Aorta (tissue), 5 donors: ENCODE measurements at regions of chr1 and their contacts with region 1.

Region 1: DNA sequence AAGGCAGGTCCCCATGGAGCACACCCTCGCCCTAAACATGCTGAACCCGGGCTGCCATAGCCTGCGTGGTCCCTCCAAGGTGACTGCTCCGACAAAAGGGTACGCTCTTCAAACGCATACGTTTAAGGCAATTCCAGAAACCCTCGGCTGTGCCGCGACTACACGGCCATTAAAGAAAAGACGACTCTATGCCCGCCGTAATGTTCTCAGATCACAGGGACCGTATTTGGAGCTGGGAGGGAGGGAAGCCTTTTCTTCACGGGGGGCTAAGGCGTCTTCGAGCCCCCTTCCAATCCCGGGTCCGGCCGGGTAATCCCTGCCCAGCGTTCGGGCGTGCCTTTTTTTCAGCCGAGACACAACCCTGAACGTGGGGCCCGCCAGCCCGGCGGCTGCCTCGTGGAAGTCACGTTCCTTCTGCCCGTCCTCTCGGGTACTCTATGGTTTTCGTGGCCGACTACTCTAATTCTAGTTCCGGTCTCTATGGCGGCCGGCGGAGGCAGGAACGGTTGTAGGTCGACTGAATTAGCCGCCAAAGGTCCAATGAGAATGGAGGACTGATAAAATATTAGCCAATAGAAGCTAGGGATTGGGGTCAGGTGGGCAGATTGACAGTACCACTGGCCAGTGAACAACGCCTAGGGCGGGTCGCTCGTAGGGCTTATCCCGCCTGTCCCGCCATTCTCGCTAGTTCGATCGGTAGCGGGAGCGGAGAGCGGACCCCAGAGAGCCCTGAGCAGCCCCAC is at the start of gene YBX1:
- DNase-seq: peak; percentile 97
- ATAC-seq: peak; percentile 99
- H3K4me3 ChIP-seq: peak within 1 kb of the TSS; percentile 95 to 96
- H3K27ac ChIP-seq: peak within 1 kb of the TSS in 1 of 2 donors; percentile 83
- H3K4me1 ChIP-seq: peaks cover 8 to 11% of the 10 kb centered on the region in 2 donors
- H3K27me3 ChIP-seq: no peaks in the 10 kb centered on the region
- total RNA-seq, gene YBX1: 393 to 498 TPM

Region 2: DNA sequence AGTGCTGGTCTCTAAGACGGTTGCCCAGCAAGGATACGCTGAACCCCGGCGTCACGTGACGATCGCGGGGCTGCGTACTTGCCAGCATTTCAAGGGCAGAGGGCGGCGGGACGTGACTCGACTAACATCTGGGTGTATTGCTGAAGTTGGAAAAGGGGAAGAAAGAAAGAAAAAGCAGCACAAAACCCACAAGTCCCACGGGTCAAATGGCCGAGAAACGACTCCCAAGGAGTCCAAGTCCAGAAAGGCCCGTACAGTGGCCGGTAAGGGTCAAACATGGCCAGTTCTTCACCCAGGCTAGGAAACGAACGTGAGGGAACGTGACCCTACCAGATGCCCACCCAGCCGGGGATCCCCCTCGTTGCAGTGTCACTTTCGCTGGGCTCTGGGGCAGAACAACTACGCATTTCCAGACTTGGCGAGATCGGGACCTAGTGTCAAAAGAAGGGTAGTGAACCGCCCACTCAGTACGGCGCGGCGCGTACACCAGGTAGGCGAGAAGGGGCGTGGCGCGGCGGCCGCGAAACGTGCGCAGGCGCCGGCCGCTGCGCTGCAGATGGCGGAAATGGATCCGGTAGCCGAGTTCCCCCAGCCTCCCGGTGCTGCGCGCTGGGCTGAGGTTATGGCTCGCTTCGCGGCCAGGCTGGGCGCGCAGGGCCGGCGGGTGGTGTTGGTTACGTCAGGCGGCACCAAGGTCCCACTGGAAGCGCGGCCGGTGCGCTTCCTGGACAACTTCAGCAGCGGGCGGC is 225.7 kb before region 1 on chr1 and contains the starts of genes PPCS and ZMYND12:
- intact Hi-C with region 1: loop called in 1 of 2 experiments (anchors 5 kb)
- DNase-seq: peak; percentile 93 to 94
- ATAC-seq: peak; percentile 97
- H3K4me3 ChIP-seq: peak within 1 kb of the TSS; percentile 58 to 65
- H3K27ac ChIP-seq: peak within 1 kb of the TSS in 1 of 2 donors; percentile 38
- H3K4me1 ChIP-seq: no peaks in the 10 kb centered on the region
- H3K27me3 ChIP-seq: no peaks in the 10 kb centered on the region
- total RNA-seq, gene PPCS: 33.7 to 41.8 TPM
- total RNA-seq, gene ZMYND12: 1.1 TPM in 1 of 2 donors, not detected in the other

Region 3: DNA sequence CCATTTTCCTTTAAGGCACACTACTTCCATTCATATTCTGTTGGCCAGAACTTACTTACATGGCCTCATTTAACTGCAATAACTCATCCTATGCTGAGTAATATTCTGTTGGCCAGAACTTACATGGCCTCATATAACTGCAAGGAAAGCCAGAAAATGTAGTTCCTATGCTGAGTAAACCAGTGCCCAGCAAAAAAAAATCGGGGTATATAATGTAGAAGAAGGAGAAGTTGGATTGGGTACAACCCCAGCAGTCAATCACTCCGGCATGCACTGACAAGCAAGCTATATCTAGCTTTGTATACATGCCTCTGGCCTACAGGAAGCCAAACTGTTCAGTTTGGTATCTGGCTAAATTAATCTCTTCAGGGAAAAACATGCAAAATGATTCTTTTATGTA is 63.0 kb before region 1 on chr1:
- intact Hi-C with region 1: no loop called
- DNase-seq: no peak
- ATAC-seq: no peak
- H3K4me3 ChIP-seq: no peak overlapping the region
- H3K27ac ChIP-seq: no peak overlapping the region
- H3K4me1 ChIP-seq: no peaks in the 10 kb centered on the region
- H3K27me3 ChIP-seq: no peaks in the 10 kb centered on the region

Region 4: GRCh38 chr1:42723501-42723900 is 41.6 kb after region 1 on chr1:
- intact Hi-C with region 1: no loop called
- DNase-seq: no peak
- ATAC-seq: no peak
- H3K4me3 ChIP-seq: no peak overlapping the region
- H3K27ac ChIP-seq: no peak overlapping the region
- H3K4me1 ChIP-seq: no peaks in the 10 kb centered on the region
- H3K27me3 ChIP-seq: no peaks in the 10 kb centered on the region

Region 5: GRCh38 chr1:42736150-42736850 is 54.4 kb after region 1 on chr1:
- intact Hi-C with region 1: no loop called
- DNase-seq: no peak
- ATAC-seq: no peak
- H3K4me3 ChIP-seq: no peak overlapping the region
- H3K27ac ChIP-seq: no peak overlapping the region
- H3K4me1 ChIP-seq: no peaks in the 10 kb centered on the region
- H3K27me3 ChIP-seq: no peaks in the 10 kb centered on the region